Cardiac septum (tissue), 1 donor: ENCODE measurements at regions of chr4 and their contacts with region 1.

Region 1: DNA sequence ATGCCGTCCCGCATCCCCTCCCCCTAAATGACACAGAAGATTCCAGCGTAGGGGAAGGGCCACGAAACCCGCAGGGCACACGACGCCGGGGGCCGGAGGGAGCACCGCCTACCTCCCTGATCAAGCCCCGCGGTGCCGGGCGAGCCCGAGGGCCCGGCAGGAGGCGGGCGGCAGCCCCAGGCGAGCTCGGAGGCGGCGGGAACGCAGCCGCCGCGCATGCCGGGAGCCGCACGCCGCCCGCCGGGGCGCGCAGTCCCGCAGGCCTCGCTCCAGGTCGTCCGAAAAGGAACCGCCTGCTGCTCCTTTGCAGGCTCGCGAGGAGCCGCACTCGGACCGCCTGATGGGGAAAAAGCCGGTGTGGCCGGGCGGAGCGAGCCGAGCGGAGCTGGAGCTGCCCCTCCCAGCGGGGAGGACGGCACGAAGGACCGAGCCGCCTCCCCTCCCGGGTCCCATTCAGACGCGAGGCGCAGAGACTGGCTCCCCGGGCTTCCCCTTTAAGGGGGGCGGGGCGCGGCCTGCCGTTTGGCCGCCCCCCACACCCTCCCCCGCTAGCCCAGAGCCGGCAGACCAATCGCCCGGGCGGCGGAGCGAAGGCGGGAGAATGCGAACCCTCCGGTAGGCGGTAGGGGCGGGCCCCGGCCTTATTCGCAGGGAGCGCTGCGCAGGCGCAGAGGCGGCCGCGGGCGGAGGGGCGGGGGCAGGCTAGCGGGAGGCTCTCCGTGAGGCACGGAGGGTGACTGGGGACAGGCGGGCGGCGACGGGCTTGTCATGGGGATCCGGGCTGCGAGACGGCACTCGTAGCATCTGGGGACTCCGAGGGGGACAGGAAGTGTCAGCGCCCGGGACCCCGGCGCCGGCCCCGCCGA is 561 bp upstream of the ING2 start:
- DNase-seq: peak; percentile 100

Region 2: DNA sequence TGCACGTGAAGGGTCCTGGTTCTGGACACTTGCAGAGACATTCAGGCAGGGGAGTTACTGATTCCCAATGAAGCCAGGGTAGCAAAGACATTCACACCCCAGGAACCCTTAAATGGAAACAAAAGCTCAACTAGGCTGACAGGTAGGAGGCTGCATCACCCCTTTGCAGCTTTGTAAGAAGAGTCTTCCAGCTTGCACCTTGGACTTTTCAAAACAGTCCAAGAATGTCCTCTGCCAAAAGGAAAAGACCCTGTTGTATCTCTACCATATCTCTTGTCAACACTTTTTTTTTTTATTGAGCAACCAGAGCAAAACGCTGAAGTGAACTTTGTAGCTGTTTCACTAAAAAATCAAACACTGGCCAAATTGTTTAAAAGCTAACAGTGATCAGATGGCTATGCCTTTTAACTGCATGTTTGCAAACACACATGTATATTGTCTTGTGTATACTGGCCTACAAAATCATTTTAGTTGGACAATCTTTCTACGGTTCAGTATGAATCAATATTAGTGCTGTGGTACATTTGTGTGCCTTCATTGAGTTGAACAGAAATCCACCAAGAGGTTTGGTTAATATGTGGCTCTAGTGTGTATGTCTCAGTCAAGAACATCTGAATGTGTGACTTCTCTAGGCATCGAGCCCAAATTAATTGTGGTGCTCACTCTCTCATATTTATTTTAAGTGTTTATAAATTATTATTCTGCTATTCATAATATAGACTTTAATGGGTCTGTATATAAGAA is 423.8 kb before region 1 on chr4:
- intact Hi-C with region 1: no loop called
- DNase-seq: no peak

Region 3: GRCh38 chr4:183098723-183099536 is 405.4 kb before region 1 on chr4 and contains the start of gene WWC2:
- intact Hi-C with region 1: loop called (anchors 10 kb)
- DNase-seq: peak; percentile 94
- total RNA-seq, gene WWC2: 38.3 TPM

Region 4: GRCh38 chr4:183444214-183445066 is 59.9 kb before region 1 on chr4 and contains the start of gene CDKN2AIP:
- intact Hi-C with region 1: loop called (anchors 5 kb)
- DNase-seq: peak; percentile 96
- total RNA-seq, gene CDKN2AIP: 9.5 TPM

Region 5: DNA sequence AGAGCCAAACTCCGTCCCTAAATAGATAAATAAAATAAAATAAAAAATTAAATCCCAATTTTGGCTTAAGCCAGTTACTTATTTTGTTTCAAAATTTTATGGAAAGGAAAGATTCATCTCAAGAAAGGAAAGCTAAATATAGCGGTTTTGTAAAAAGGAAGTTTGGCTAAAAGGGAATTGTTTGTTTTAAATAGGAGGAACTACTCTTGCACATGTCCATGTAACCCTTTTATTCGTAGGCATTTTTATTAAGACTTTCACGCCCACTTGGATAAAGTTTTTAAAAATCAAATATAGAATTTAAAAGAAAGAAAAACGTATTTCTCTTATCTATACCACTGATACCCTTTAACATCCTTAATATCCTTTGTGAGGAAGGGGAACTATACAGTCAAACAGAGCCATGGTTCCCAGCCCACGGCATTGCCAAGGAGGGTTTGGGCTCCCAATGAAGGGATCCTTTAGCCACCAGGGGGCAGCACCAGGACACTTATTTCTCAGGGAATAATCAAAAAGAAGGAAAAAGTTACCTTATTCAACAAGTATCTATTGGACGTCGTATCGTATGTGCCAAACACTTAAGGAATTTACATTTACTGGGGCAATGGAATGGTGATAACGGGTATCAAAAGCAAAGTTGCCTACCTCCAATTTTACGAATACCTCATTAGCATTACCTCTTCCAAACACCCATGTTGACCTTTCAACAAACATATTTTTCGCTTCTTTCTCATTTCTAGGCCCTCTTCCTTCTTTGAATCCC is 32.2 kb before region 1 on chr4:
- intact Hi-C with region 1: loop called (anchors 2 kb)
- DNase-seq: peak; percentile 84

Region 6: DNA sequence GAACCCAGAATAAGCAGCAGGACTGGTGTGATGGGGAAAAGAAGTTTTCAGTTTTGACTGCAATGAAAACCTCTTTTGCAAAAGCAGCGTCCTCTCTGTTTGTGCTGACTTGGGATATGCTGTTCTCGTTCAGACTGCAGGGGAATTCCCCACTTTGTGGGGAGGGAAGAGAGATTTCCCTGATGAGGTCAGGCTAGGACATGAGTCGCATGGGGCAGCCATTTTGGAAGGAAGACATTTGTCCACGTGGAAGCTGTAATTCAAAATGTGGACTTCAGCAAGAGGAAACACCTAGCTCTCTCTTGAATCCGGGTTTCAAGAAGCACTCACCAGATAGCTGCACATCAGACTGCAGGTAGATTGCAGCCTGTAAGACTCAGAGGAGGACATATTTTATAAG is 39.8 kb after region 1 on chr4:
- intact Hi-C with region 1: no loop called
- DNase-seq: no peak

Region 7: DNA sequence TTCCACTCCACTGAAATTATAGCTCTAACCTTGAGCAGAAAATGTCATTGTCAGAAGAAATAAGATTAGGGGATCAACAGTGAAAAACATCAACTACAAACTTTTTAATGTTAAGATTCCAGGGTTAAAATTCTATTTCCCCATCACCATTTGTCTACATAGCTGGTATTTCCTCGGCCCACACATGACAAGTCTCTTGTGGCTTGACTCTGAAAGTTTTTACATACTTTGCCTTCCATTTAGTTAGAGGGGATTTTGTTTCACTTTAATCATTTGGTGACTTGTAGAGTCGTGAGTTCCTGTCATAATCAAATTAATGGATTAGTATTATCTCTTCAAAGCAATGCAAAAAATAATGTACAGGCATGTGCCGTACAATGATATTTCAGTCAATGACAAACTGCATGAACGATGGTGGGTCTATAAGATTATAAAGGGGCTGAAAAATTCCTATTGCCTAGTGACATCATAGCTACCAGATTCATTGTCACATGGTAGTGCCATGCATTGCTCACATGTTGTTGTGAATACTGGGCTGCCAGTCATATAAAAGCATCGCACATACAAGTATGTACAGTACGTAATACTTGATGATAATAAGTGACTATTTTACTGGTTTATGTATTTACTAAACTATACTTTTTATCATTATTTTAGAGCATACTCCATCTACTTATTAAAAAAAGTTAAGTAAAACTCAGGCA is 72.6 kb after region 1 on chr4:
- intact Hi-C with region 1: no loop called
- DNase-seq: no peak

Region 8: GRCh38 chr4:183636923-183637322 is 132.6 kb after region 1 on chr4:
- intact Hi-C with region 1: no loop called
- DNase-seq: no peak

Region 9: GRCh38 chr4:183659029-183659871 is 155.0 kb after region 1 on chr4 and contains the starts of genes RWDD4 and TRAPPC11:
- intact Hi-C with region 1: loop called (anchors 1 kb)
- DNase-seq: peak; percentile 99
- total RNA-seq, gene RWDD4: 17.5 TPM
- total RNA-seq, gene TRAPPC11: 21.3 TPM